ENCODE measurements at regions of chr1 and their contacts with region 1.

Region 1: GRCh38 chr1:26889551-26890466 is at the start of gene GPN2:
- DNase-seq: peak; percentile 29
- H3K4me3 ChIP-seq: peak within 1 kb of the TSS; percentile 97
- H3K27me3 ChIP-seq: no peaks in the 10 kb centered on the region
- CTCF ChIP-seq: no peak
- polyA plus RNA-seq, gene GPN2: 35.3 and 44.9 TPM in 2 replicates

Region 2: GRCh38 chr1:26856604-26857469 is 33.0 kb before region 1 on chr1:
- CTCF ChIA-PET with region 1: interaction called, 11 read pairs
- POLR2A ChIA-PET with region 1: no interaction called
- DNase-seq: no peak
- H3K4me3 ChIP-seq: no peak overlapping the region
- H3K27me3 ChIP-seq: no peaks in the 10 kb centered on the region
- CTCF ChIP-seq: no peak

Region 3: GRCh38 chr1:26900001-26900814 is 10.4 kb after region 1 on chr1 and contains the start of gene GPATCH3:
- CTCF ChIA-PET with region 1: interaction called, 7 read pairs
- POLR2A ChIA-PET with region 1: interaction called, 16 read pairs
- DNase-seq: no peak
- H3K4me3 ChIP-seq: peak within 1 kb of the TSS; percentile 82
- H3K27me3 ChIP-seq: no peaks in the 10 kb centered on the region
- CTCF ChIP-seq: no peak
- polyA plus RNA-seq, gene GPATCH3: 5.7 and 12.2 TPM in 2 replicates

Measured in BJ (cell line).